ENCODE measurements at regions of chr9 and their contacts with region 1.

Region 1: DNA sequence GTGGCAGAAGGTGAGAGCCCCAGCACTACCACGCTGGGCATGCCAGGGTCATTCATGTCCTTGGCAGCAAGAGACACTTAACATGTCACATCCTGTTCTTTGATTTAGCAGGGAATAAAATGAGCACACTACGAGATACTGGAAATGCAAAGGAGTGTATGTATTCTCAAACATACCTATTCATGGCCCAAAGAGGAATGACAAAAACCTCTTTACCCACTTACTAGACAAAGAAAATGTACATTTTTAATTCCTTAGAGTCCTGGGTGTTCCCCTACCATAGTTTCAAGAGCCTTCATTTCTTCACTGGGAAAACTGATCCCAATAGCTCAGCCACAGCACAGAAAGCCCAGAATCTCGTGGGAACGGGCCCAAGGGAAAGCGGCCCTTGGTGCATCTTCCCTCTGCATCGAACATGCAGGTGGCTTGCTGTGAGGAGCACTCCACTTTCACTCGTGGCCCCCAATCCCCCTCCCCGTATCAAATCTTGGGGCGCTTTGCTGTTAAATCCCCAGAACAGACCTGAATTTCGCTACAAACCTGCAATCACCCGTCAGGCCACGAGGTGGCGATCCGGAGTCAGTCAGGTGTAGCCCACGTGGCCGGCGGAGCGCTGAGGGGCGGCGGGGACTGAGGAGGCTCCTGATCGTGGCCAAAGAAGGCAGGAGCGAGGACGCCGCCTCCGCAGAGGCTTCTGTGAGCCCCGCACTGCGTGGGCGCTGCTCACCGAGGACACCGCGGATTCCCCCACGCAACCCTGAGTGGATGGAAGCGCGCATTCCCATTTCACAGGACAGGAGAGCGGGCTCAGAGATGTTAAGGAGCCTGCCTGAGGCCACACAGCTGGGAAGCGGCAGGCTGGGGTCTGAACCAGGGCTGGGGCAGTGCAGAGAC is 91.4 kb downstream of the LMX1B start:
- DNase-seq: peak; percentile 81
- H3K4me3 ChIP-seq: no peak overlapping the region
- H3K27ac ChIP-seq: no peak overlapping the region
- H3K4me1 ChIP-seq: no peaks in the 10 kb centered on the region
- H3K27me3 ChIP-seq: peaks cover 39% of the 10 kb centered on the region
- CTCF ChIP-seq: peak; percentile 81

Region 2: DNA sequence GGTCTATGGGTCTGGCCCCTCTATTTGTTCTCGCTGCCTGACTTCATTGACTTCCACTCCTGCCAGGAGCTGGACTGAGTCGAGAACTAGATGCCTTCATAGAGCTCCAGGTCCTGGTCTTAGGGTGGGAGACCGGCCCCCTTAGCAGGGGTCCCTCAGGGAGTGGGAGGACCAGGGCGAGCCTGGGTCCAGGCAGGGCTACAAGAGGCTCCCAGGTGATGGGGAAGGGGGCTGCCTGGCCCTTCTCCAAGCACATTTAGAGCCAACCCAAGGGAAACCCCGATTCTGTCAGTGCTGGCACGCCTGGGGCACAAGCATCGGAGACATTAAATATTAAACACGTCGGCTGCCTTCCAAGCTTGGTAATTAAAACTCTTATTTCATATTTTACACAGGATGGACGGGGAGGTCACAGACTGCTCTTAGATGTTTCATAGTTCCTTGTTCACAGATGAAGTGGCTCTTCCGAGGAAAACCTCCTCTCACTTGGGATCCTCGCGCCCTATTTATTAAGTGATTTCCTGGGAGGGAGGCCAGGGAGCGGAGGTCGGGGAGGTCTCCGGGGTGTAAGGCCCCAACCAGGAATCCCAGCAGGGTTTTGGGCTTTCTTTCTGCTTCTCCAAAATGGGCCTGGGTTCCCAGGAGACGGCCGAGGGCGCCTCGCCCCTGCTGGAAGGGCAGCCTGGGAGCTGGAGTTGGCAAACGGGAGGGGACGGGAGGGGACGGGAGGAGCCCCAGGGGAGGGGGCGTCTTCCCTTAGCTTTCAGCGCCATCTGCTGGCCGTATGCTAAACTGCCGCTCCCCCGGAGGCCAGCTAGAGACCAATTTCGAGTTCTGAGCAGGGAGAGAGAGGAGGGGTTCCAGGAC is 76.3 kb after region 1 on chr9:
- intact Hi-C with region 1: loop called (anchors 2 kb)
- DNase-seq: peak; percentile 78
- H3K4me3 ChIP-seq: no peak overlapping the region
- H3K27ac ChIP-seq: no peak overlapping the region
- H3K4me1 ChIP-seq: no peaks in the 10 kb centered on the region
- H3K27me3 ChIP-seq: peaks cover 6% of the 10 kb centered on the region
- CTCF ChIP-seq: peak; percentile 95

Measured in colonic mucosa (tissue), 4 donors.